ENCODE measurements at regions of chr1 and their contacts with region 1.

Region 1: DNA sequence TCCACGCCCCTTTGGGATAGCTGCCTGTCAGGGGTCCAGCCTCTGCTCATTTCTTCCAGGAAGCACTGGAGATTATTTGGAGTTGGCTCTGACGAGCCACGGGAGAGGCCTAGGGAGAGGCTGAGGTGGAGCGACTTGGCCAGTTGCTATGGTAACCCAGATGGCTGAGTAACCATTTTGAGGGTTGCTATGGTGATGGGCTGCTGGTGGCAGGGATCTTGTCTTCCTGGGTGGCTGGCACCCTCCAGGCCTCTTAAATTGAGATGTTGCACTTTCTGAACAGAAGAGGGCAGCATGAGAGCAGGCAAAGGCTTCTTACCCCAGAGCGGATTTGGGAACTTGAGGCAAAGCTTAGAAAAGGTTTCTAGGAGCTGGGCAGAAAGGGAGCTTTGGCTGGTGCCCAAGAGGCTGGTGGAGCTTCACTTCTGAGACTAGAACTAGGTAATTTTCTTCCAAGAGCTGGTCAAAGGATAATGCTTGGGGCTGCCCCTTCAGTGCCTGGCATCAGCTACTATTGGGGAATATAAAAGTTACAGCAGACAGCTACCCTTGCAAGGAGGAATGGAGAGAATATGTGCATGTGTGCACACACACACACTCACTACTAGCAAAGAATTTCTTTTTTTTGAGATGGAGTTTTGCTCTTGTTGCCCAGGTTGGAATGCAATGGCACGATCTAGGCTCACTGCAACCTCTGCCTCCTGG is 72.5 kb downstream of the NDUFS5 start:
- DNase-seq: peak; percentile 78
- H3K4me3 ChIP-seq: no peak overlapping the region
- CTCF ChIP-seq: peak; percentile 55

Region 2: DNA sequence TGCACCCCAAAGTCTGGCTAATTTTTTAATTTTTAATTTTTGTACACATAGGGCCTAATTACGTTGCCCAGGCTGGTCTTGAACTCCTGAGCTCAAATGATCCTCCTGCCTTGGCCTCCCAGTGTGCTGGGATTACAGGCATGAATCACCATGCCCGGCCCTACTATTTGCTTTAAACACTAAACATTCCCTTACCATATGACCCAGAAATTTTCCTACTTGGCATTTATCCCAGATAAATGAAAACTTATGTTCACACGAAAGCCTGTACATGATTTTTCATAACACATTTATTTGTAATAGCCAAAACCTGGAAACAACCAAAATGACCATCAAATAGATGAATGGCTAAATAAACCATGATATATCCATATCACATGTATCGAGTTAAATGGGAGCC is 36.7 kb before region 1 on chr1:
- CTCF ChIA-PET with region 1: no interaction called
- POLR2A ChIA-PET with region 1: no interaction called
- DNase-seq: no peak
- H3K4me3 ChIP-seq: no peak overlapping the region
- CTCF ChIP-seq: no peak

Region 3: GRCh38 chr1:39081266-39082009 is 17.3 kb before region 1 on chr1:
- CTCF ChIA-PET with region 1: interaction called, 41 read pairs
- POLR2A ChIA-PET with region 1: no interaction called
- DNase-seq: no peak
- H3K4me3 ChIP-seq: peak overlapping the region; percentile 59
- CTCF ChIP-seq: no peak

Region 4: DNA sequence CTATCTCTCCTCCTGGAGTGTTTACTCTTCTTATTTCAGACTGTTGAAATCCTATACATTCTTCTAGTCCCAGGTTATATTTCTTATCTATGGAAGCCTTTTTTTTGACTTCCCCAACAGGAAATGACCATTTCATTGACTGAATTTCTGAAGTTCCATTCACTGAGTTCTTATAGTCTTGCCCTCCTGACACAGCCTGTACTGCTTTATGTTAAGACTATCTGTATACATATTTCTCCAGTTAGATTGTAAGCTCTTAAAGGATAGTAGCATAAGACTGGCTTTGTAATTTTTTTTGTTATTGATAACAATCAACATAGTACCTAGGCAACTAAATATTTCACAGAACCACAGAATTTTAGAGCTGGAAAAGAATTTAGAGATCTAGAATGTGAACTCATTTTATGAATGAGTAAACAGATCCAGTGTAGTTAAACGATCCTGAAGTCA is 90.9 kb after region 1 on chr1:
- CTCF ChIA-PET with region 1: interaction called, 81 read pairs
- POLR2A ChIA-PET with region 1: interaction called, 4 read pairs
- DNase-seq: no peak
- H3K4me3 ChIP-seq: no peak overlapping the region
- CTCF ChIP-seq: no peak

Region 5: GRCh38 chr1:39214998-39215873 is 116.5 kb after region 1 on chr1:
- CTCF ChIA-PET with region 1: interaction called, 21 read pairs
- POLR2A ChIA-PET with region 1: no interaction called
- DNase-seq: no peak
- H3K4me3 ChIP-seq: no peak overlapping the region
- CTCF ChIP-seq: no peak

Region 6: GRCh38 chr1:39268112-39268581 is 169.4 kb after region 1 on chr1:
- CTCF ChIA-PET with region 1: interaction called, 19 read pairs
- POLR2A ChIA-PET with region 1: no interaction called
- DNase-seq: peak; percentile 44
- H3K4me3 ChIP-seq: peak overlapping the region; percentile 54
- CTCF ChIP-seq: no peak

Region 7: GRCh38 chr1:39391691-39392679 is 293.3 kb after region 1 on chr1:
- CTCF ChIA-PET with region 1: interaction called, 27 read pairs
- POLR2A ChIA-PET with region 1: no interaction called
- DNase-seq: peak; percentile 24
- H3K4me3 ChIP-seq: no peak overlapping the region
- CTCF ChIP-seq: no peak

Region 8: DNA sequence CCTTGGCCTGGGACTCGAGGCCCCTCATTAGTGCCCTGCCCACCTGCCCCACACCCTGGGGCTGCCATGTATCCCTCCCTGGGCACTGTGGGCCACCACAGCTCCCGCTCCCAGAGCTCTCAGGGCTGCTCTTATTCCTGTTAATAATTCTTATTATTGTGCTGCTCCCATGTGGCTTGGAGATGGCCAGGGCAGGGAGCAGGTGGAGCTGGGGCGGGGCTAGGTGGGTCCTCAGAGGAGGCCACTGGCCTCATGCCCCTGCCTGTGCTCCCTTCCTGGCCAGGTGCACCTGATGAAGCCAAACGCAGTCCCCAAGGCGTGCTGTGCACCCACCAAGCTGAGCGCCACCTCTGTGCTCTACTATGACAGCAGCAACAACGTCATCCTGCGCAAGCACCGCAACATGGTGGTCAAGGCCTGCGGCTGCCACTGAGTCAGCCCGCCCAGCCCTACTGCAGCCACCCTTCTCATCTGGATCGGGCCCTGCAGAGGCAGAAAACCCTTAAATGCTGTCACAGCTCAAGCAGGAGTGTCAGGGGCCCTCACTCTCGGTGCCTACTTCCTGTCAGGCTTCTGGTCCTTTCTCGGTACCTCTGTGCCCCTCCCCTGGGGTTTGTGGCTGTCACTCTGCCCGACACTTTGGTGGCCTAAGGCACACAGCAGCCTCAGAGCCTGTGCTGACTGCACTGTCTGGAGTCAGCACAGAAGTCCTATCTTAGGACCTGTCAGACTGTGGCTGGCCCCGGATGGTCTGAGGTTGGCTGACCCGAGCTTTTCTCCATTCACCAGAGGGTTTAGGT is 426.9 kb after region 1 on chr1:
- CTCF ChIA-PET with region 1: interaction called, 12 read pairs
- POLR2A ChIA-PET with region 1: no interaction called
- DNase-seq: no peak
- H3K4me3 ChIP-seq: no peak overlapping the region
- CTCF ChIP-seq: no peak